Heart left ventricle (tissue), 16 donors: ENCODE measurements at regions of chr6 and their contacts with region 1.

Region 1: GRCh38 chr6:165439928-165440554 is 130.6 kb upstream of the C6orf118 start:
- DNase-seq: no peak
- ATAC-seq: peak in 2 of 4 donors; percentile 48 to 63
- H3K4me3 ChIP-seq: no peak overlapping the region
- H3K27ac ChIP-seq: no peak overlapping the region
- H3K4me1 ChIP-seq: peaks cover 0 to 5% (median 0%) of the 10 kb centered on the region in 12 donors
- H3K27me3 ChIP-seq: no peaks in the 10 kb centered on the region
- CTCF ChIP-seq: peak; percentile 49 to 78 (median 68)
- POLR2A ChIP-seq: no peak

Region 2: GRCh38 chr6:165676435-165677068 is 236.5 kb after region 1 on chr6:
- intact Hi-C with region 1: loop called in 1 of 10 experiments (anchors 10 kb)
- DNase-seq: peak in 3 of 5 donors; percentile 61 to 80 (median 66)
- ATAC-seq: peak; percentile 55 to 98 (median 90)
- H3K4me3 ChIP-seq: no peak overlapping the region
- H3K27ac ChIP-seq: peak overlapping the region in 3 of 12 donors; percentile 22 to 50 (median 24)
- H3K4me1 ChIP-seq: peaks cover 0 to 10% (median 1%) of the 10 kb centered on the region in 12 donors
- H3K27me3 ChIP-seq: no peaks in the 10 kb centered on the region
- CTCF ChIP-seq: peak in 10 of 12 donors; percentile 23 to 59 (median 36)
- POLR2A ChIP-seq: no peak

Region 3: DNA sequence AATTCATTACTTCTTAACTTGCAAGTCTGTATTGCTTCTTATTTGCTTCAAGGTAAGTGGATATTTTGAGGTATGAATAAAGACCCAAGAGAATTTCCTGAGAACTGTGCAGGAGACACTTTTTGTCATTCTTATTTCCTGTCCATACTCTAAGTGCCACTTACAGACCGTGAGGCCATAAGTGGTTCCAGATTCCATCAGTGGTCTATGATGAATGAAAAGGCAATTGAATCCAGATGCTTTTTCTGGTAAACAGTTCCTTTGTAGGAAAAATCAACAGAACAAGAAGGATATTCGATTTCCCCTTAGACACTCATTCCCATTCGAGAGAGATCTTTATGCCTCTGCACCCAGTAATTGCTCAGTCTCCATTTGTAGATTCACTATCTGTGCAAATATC is 281.3 kb after region 1 on chr6:
- intact Hi-C with region 1: loop called in 8 of 10 experiments (anchors 5 to 10 kb)
- DNase-seq: no peak
- ATAC-seq: no peak
- H3K4me3 ChIP-seq: no peak overlapping the region
- H3K27ac ChIP-seq: no peak overlapping the region
- H3K4me1 ChIP-seq: peaks cover 0 to 18% (median 10%) of the 10 kb centered on the region in 12 donors
- H3K27me3 ChIP-seq: no peaks in the 10 kb centered on the region
- CTCF ChIP-seq: no peak
- POLR2A ChIP-seq: no peak

Region 4: DNA sequence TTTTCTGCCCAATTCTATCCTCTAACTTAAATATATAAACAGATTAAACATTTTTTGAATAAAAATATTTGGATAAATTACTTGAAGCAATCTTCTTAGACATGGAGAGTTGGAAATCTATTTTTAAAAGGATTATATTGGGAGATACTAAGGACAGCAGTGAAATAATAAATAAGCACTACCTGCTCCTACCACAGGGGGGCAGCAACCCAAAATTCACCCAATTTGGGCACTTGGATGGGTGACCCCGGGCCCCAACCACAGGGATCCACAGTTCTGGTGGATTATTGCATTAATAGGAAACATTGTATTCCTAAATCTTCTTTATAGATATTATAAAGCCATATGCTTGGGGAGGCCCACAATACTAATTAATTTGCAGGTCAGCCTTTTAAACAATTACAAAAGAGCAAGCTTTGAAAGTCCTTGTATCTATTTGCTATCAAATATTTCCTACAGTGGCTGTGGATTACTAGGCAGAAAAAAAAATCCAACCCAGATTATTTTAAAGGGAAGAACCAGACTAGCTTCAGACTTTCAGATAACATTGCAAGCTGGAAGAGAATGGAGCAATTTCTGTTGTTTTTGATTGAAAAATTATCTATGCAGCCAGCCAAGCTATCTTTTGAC is 289.4 kb after region 1 on chr6:
- intact Hi-C with region 1: loop called in 8 of 10 experiments (anchors 5 to 10 kb)
- DNase-seq: no peak
- ATAC-seq: peak in 2 of 4 donors; percentile 51 to 63
- H3K4me3 ChIP-seq: no peak overlapping the region
- H3K27ac ChIP-seq: no peak overlapping the region
- H3K4me1 ChIP-seq: peaks cover 0 to 5% (median 0%) of the 10 kb centered on the region in 12 donors
- H3K27me3 ChIP-seq: no peaks in the 10 kb centered on the region
- CTCF ChIP-seq: peak; percentile 71 to 92 (median 86)
- POLR2A ChIP-seq: no peak

Region 5: DNA sequence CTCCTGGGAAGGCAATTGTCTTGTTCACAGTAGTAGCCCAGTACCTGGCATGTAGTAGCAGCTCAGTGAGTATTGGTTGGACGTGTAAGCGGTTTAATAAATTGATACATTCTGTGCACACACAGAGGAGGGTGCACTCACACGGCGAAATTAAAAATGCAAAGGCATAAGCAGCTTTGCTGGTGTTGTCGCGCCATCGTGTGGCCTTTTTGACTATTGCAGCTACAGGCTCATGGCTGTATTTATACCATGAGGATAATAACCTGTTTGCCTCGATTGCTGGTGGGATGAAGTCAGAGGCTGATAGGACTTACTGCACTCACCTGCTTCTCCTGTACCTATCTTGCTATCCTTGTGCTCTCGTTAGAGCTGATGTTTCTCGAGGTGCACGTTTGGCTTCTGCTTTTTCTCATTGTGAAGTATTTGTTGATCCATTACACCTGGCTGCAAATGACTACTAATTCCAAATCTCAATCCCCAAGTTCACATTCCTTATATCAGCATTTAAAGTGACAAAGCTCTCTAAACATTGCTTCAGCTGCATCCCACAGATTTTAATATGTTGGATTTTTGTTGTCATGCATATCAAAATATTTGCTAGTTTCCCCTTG is 666.1 kb after region 1 on chr6:
- intact Hi-C with region 1: loop called in 1 of 10 experiments (anchors 10 kb)
- DNase-seq: peak; percentile 45 to 78 (median 64)
- ATAC-seq: peak in 3 of 4 donors; percentile 60 to 86 (median 73)
- H3K4me3 ChIP-seq: no peak overlapping the region
- H3K27ac ChIP-seq: no peak overlapping the region
- H3K4me1 ChIP-seq: no peaks in the 10 kb centered on the region
- H3K27me3 ChIP-seq: peaks cover 0 to 16% (median 5%) of the 10 kb centered on the region in 9 donors
- CTCF ChIP-seq: peak; percentile 77 to 93 (median 84)
- POLR2A ChIP-seq: no peak